ENCODE measurements at regions of chr3 and their contacts with region 1.

Region 1: GRCh38 chr3:36729204-36730056 is 34.9 kb downstream of the DCLK3 start:
- DNase-seq: no peak
- ATAC-seq: peak; percentile 67
- H3K4me3 ChIP-seq: no peak overlapping the region
- H3K27ac ChIP-seq: no peak overlapping the region
- H3K4me1 ChIP-seq: no peaks in the 10 kb centered on the region
- H3K27me3 ChIP-seq: no peaks in the 10 kb centered on the region
- CTCF ChIP-seq: peak; percentile 44 to 86 (median 80)
- POLR2A ChIP-seq: no peak

Region 2: DNA sequence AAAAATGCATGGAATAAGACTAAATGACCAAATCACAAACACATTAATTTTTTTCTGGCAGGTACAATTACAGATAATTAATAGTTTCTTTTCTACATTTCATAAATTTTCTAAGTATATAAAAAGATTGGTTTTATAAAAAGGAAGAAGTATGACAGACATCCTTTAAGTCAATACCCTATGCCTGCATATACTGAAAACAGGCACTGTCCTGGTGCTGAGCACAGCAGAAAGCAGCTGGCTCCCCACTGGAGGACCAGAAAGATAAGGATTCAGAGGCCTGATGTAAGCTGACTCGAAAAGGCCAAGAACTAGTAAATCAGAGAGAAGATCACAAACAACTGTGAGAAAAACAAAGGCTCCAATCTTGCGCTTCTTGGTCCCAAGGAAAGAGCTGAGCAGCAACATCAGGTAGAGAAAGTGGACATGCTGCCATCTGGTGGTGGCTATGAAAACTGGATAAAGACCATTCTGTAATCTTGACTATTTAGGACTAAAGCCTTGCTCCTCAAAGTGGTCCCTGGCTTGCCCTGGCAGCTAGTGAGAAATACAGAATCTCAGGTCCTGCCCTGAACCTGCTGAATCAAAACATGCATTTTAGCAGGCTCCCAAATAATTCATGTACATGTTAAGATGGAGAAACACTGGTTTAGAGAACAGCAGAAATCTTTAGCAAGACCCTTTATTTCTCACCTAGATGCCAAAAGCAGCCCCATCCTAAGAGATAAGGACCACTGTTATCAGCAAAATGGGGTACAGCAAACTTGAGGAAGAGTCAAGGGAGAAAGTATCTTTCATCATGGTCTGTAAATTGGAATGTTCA is 139.4 kb after region 1 on chr3:
- intact Hi-C with region 1: loop called (anchors 5 kb)
- DNase-seq: peak; percentile 40 to 56 (median 52)
- ATAC-seq: peak; percentile 65
- H3K4me3 ChIP-seq: no peak overlapping the region
- H3K27ac ChIP-seq: no peak overlapping the region
- H3K4me1 ChIP-seq: no peaks in the 10 kb centered on the region
- H3K27me3 ChIP-seq: no peaks in the 10 kb centered on the region
- CTCF ChIP-seq: peak; percentile 54 to 79 (median 63)
- POLR2A ChIP-seq: no peak

Region 3: GRCh38 chr3:36957862-36958686 is 228.6 kb after region 1 on chr3:
- intact Hi-C with region 1: loop called (anchors 5 kb)
- DNase-seq: no peak
- ATAC-seq: no peak
- H3K4me3 ChIP-seq: no peak overlapping the region
- H3K27ac ChIP-seq: no peak overlapping the region
- H3K4me1 ChIP-seq: no peaks in the 10 kb centered on the region
- H3K27me3 ChIP-seq: no peaks in the 10 kb centered on the region
- CTCF ChIP-seq: no peak
- POLR2A ChIP-seq: no peak

Region 4: GRCh38 chr3:37210230-37210629 is 480.8 kb after region 1 on chr3:
- intact Hi-C with region 1: loop called (anchors 10 kb)
- DNase-seq: no peak
- ATAC-seq: no peak
- H3K4me3 ChIP-seq: no peak overlapping the region
- H3K27ac ChIP-seq: no peak overlapping the region
- H3K4me1 ChIP-seq: no peaks in the 10 kb centered on the region
- H3K27me3 ChIP-seq: no peaks in the 10 kb centered on the region
- CTCF ChIP-seq: no peak
- POLR2A ChIP-seq: no peak

Measured in body of pancreas (tissue), 4 donors.